ENCODE measurements at regions of chr9 and their contacts with region 1.

Region 1: GRCh38 chr9:86968258-86968920 is 21.1 kb upstream of the GAS1 start:
- DNase-seq: no peak
- H3K4me3 ChIP-seq: no peak overlapping the region
- H3K27ac ChIP-seq: no peak overlapping the region
- H3K27me3 ChIP-seq: no peaks in the 10 kb centered on the region
- CTCF ChIP-seq: no peak

Region 2: DNA sequence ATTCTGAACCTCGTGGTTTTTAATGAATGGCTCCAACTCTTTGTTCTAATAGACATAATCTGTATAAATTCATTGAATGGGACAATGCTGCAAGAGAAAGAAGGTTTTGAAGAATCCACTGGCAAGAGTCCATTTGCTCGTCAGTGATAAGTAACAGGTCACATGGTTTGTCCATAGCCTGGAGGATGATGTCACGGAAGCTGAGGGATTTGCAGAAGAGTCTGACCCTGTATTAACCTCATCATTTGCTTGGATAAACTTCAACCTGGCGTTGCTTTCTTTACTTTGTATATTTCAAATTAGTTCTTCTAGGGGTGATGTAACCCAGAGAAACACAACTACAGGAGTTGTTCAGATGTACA is 218.5 kb before region 1 on chr9:
- in situ Hi-C with region 1: no loop called
- DNase-seq: peak; percentile 79
- H3K4me3 ChIP-seq: no peak overlapping the region
- H3K27ac ChIP-seq: no peak overlapping the region
- H3K27me3 ChIP-seq: no peaks in the 10 kb centered on the region
- CTCF ChIP-seq: no peak

Region 3: GRCh38 chr9:86766912-86767311 is 201.5 kb before region 1 on chr9:
- in situ Hi-C with region 1: no loop called
- DNase-seq: peak; percentile 69
- H3K4me3 ChIP-seq: no peak overlapping the region
- H3K27ac ChIP-seq: no peak overlapping the region
- H3K27me3 ChIP-seq: no peaks in the 10 kb centered on the region
- CTCF ChIP-seq: no peak

Region 4: DNA sequence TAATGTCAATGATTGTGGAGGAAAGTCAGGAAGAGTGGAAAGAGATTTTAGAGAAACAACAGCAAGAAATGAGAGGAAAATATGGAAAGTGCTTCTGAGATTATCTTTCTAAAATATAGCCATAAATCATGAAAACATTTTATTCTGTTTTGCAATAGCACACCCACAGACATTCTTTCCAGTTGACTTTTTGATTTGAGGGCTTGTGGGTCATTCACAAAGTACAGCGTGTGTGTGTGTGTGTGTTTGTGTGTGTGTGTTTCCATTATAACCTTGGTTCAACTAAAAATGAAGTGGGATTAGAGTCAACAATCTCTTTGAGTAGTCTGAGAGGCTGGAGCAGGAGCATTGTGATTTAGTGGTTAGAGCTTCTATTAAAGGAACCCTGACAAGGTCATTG is 95.5 kb after region 1 on chr9:
- in situ Hi-C with region 1: loop called (anchors 25 kb)
- DNase-seq: peak; percentile 64
- H3K4me3 ChIP-seq: no peak overlapping the region
- H3K27ac ChIP-seq: no peak overlapping the region
- H3K27me3 ChIP-seq: no peaks in the 10 kb centered on the region
- CTCF ChIP-seq: no peak

Measured in brain microvascular endothelial cell (primary cell).